ENCODE measurements at regions of chr1 and their contacts with region 1.

Region 1: GRCh38 chr1:204494281-204495077 is at the start of gene PIK3C2B:
- DNase-seq: peak; percentile 52
- ATAC-seq: peak; percentile 87
- H3K4me3 ChIP-seq: peak within 1 kb of the TSS; percentile 80 to 94
- H3K27ac ChIP-seq: peak within 1 kb of the TSS; percentile 97
- H3K4me1 ChIP-seq: peaks cover 17 to 36% of the 10 kb centered on the region in 2 experiments
- H3K27me3 ChIP-seq: no peaks in the 10 kb centered on the region
- CTCF ChIP-seq: peak in 2 of 3 experiments; percentile 25 to 29; a peak in 3 of 6 replicates
- POLR2A ChIP-seq: peak; percentile 68
- RAD21 ChIP-seq: peak; percentile 36; the same call in 1 of the 2 replicates
- total RNA-seq, gene PIK3C2B: 17.4 TPM

Region 2: DNA sequence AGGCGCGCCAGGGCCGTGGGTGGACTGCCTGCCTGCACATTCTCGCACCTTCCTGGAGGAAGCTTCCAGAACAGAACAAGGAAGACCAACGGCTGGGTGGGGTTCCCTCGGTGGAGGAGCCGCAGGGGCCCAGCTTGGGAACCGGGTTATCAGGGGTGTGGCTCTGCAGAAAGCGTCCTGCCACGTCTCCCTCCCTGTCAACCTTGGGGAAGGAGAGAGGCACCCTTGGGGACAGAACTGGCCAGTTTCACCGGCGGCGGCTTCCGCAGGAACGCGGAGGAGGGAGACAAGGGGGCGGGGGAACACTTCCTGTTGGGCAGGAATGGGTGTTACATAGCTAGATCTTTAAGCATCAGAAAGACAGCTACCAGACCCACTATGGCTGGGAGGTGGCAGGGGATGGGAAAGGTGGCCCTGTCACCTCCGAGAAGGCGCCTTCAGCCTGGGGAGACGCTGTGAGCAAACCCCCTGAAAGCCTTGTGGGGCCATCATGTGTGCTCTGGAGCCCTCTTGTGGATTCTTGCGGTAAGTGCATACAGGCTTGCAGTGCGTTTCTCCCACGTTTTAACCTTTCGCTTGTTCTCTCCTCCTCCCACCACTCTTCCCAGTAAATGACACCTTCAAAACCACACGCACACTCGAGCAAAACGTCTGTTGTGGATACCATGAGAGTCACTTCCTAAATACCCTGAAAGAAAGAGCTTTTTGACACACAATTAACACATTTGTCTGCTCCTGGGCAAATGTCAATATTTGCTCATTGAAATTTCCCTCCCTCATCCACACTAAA is 130.9 kb before region 1 on chr1:
- CTCF ChIA-PET with region 1: no interaction called
- POLR2A ChIA-PET with region 1: no interaction called
- RAD21 ChIA-PET with region 1: no interaction called
- intact Hi-C with region 1: no loop called
- DNase-seq: peak; percentile 54
- ATAC-seq: peak; percentile 74
- H3K4me3 ChIP-seq: peak overlapping the region; percentile 10 to 26
- H3K27ac ChIP-seq: no peak overlapping the region; the same call in 1 of the 2 replicates
- H3K4me1 ChIP-seq: peaks cover 6 to 20% of the 10 kb centered on the region in 2 experiments; a peak in 3 of 4 replicates
- H3K27me3 ChIP-seq: no peaks in the 10 kb centered on the region
- CTCF ChIP-seq: peak; percentile 94 to 96 (median 95)
- POLR2A ChIP-seq: peak; percentile 9
- RAD21 ChIP-seq: peak; percentile 99

Region 3: DNA sequence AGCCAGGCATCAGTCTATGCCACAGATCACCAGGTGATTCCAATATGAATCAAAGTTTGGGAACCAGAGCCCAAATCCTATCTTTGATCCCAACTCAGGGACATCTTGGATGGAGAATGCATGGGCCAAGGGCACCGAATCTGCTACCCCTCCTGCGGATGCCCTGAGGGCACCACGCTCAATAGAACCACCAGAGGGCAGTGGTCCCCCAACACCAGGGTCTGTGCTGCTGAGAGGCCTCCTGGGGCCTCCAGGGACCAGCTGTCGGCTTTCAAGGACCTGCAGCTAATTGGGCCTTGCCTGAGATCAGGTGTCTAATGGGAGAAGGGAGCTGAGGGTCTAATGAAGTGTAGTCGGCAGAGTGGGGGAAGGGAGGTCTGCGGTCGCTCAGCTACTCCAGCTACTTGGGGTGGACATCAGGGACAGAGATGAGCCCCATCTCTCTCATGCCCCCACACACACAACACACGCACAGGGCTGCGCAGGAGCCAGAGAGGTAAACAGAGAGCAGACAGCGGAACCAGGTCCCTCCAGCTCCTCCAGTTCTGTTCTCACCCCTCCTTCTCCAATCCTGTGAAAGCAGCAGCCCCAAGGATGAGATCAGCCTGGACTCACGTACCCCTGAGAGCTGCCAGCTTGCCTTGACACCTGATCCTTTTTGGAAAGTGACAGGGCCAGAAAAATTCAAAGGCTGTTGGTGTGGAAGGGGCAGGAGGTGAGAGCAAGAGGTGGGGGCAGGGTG is 47.9 kb before region 1 on chr1:
- CTCF ChIA-PET with region 1: interaction called, 18 read pairs
- POLR2A ChIA-PET with region 1: no interaction called
- RAD21 ChIA-PET with region 1: interaction called, 3 to 8 read pairs
- intact Hi-C with region 1: loop called (anchors 1 kb)
- DNase-seq: no peak
- ATAC-seq: peak; percentile 87
- H3K4me3 ChIP-seq: no peak overlapping the region
- H3K27ac ChIP-seq: no peak overlapping the region
- H3K4me1 ChIP-seq: peaks cover 17 to 45% of the 10 kb centered on the region in 2 experiments
- H3K27me3 ChIP-seq: no peaks in the 10 kb centered on the region
- CTCF ChIP-seq: peak; percentile 70 to 87 (median 76)
- POLR2A ChIP-seq: no peak
- RAD21 ChIP-seq: peak; percentile 88